Left cardiac atrium (tissue), 4 donors: ENCODE measurements at regions of chr6 and their contacts with region 1.

Region 1: DNA sequence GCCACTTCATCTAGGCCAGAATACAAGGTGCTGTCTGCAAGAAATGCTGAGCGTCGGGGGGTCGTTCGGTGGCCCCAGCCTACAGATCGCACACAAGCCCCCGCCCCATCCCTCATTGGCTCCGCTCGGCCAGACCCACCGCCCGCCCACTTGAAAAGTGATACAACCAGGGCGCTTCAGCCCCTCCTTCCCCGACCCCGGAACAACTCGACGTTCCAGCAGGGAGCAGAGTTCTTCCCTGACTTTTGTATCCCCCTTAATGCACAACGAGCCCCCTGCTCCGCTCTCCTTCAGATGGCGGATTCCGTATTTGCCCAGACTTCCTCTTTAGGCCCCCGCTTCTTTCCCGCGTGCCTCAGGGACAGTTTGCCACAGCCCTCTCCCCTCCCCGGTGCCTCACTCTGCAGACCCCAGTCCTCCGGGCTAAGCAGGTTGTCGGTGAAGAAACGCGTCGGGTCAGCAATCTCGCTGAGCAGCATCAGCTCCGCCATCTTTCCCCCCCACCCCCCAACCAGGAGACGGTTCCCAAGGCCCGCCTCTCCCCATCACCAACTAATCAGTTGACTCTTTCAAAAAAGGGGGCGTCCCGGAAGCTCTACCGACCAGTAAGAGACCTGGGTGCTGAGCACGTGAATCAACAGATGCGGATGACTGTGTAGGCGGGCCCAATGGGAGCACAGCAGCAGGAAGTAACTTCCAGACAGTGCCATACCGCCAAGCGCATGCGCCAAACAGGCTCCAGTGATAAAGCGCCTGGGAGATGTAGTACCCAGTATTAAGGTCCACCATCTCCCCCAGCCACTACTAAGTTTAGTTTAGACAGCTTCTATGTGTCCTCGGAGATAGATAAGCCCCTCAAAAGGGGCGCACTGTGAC is at the start of gene ATF6B:
- DNase-seq: peak; percentile 100
- ATAC-seq: peak; percentile 95
- total RNA-seq, gene ATF6B: 35.4 to 36.2 TPM

Region 2: DNA sequence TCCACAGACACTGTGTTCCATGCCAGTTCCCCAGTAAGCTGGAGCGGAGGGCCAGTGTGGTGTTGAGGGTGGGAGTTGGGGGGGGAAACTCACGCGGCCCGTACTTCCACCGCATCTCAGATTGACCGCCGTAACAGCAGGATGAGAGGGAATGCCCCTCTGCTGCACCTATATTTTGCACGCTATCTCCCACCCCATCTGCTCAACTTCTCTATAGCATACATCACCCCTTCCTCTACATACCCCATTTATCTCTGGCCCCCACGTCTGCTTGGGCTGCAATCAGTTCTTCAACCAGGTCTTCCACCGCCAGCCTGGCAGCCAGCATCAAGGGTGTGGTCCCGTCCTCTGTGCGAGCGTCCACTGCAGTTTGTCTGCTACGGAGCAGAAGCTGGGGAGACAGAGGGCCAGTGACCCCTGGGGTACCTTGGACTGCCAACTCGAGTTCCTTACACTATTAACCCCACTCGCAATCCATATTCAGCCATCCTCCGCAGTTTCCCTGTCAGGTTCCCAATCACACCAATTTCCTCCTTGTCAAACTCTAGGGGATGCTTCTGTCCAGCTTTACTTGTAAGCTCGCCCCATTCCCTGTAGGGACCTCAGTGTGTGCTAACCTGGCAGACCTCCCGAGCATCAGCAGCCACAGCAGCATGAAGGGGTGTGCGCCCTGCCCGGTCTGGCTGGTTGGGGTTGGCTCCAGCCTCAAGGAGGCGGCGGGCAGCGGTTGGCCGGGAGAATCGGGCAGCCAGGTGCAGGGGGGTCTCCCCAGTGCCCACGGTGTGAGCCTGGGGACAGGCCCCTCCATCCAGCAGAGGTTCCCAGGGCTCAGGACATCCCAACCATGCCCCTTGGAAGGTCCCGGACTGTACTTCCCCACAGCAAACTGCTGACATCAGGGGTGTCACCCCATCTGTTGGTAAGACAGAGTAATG is 69.0 kb after region 1 on chr6:
- intact Hi-C with region 1: no loop called
- DNase-seq: peak; percentile 62
- ATAC-seq: no peak

Region 3: DNA sequence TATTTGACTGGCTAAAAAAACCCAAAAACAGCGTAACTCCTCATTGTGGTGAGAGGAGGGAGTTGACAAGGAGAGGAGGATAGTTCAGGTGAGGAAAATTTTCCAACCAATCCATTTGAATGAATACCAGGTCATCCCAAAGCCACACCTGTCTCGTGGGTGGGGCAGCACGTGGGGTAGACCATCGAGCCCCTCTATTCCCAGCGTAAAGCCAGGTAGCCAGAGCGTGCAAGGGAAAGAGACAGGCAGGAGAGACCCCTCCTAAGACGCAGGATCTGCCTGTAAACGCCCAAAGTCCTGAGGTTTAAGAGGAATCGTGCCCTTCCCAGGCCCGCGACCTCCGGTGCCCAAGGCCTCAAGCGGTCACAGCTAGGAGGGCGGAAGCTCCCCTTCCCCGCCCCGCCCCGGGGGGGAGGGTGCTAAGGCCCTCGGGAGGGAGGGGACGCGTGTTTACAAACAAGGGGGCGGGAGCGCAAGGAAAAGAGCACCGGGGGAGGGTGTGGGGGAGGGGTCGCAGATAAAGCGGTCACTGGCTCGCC is 1071.8 kb after region 1 on chr6:
- intact Hi-C with region 1: loop called in 1 of 2 experiments (anchors 5 kb)
- DNase-seq: peak; percentile 81
- ATAC-seq: peak; percentile 40 to 56